ENCODE measurements at regions of chr4 and their contacts with region 1.

Region 1: GRCh38 chr4:152535903-152536544 is at the start of gene FBXW7:
- DNase-seq: peak; percentile 99 to 100 (median 100)
- H3K4me3 ChIP-seq: peak within 1 kb of the TSS; percentile 66 to 93
- H3K4me3 Mint-ChIP-seq: peak within 1 kb of the TSS; percentile 96 to 99 (median 98)
- H3K27ac ChIP-seq: peak within 1 kb of the TSS; percentile 87
- H3K27ac Mint-ChIP-seq: peak within 1 kb of the TSS; percentile 93 to 100 (median 99)
- H3K4me1 ChIP-seq: peaks cover 72% of the 10 kb centered on the region
- H3K4me1 Mint-ChIP-seq: peaks cover 43 to 77% (median 62%) of the 10 kb centered on the region in 4 donors
- H3K27me3 ChIP-seq: no peaks in the 10 kb centered on the region
- H3K27me3 Mint-ChIP-seq: no peaks in the 10 kb centered on the region
- total RNA-seq, gene FBXW7: 138 to 148 TPM

Region 2: DNA sequence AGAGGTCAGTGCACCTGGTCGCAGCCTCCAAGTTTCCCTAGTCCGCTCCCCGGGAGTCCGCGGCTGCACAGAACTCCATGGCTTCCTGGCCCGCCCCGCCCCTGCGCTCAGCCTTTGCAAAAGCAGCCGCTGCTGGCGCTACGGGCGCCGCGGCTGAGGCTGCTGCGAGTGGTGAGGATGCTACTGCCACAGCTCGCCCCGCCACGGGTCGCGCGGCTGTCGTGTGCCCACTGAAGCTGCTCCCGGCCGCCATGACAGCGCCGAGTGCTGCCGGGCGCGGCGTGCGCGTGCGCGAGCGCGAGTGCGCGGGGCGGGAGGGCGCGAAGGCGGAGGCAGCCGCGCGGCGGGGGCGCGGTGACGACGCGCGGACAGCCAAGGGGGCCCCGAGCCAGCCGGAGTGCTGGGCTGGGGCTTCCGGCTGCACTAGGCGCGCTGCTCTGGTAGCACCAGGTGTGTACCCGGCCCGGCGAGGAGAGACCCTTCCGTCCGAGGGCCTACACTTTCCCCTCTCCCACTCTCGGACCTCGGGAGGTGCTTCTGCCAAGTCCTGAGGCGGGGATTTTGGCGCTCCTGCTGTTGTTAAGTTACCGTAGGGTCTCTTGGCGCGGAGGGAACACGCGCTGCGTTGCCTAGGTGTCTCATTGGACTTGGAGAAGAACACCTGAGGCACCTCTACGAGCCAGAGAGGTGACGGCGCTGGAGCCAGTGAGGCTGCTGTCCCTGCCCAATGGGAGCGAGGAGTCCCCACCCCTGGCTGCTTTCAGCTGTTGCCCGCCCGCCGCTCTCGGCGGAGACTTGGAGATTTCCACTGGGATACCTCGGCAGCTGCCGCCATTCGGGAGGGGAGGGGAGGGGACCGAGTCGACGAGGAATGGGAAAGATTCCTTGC is 1520.3 kb before region 1 on chr4:
- CTCF ChIA-PET with region 1: no interaction called
- POLR2A ChIA-PET with region 1: no interaction called
- intact Hi-C with region 1: loop called (anchors 2 kb)
- DNase-seq: peak; percentile 81 to 90 (median 88)
- H3K4me3 ChIP-seq: peak overlapping the region; percentile 92 to 98
- H3K4me3 Mint-ChIP-seq: peak overlapping the region; percentile 100
- H3K27ac ChIP-seq: peak overlapping the region; percentile 88
- H3K27ac Mint-ChIP-seq: peak overlapping the region; percentile 93 to 99 (median 99)
- H3K4me1 ChIP-seq: peaks cover 40% of the 10 kb centered on the region
- H3K4me1 Mint-ChIP-seq: peaks cover 19 to 44% (median 26%) of the 10 kb centered on the region in 4 donors
- H3K27me3 ChIP-seq: no peaks in the 10 kb centered on the region
- H3K27me3 Mint-ChIP-seq: no peaks in the 10 kb centered on the region

Region 3: GRCh38 chr4:152106113-152106763 is 429.8 kb before region 1 on chr4:
- CTCF ChIA-PET with region 1: no interaction called
- POLR2A ChIA-PET with region 1: interaction called, 5 read pairs
- intact Hi-C with region 1: loop called (anchors 10 kb)
- DNase-seq: peak in 2 of 5 donors; percentile 20 to 29
- H3K4me3 ChIP-seq: no peak overlapping the region
- H3K4me3 Mint-ChIP-seq: peak overlapping the region in 6 of 8 donors; percentile 23 to 73 (median 52)
- H3K27ac ChIP-seq: no peak overlapping the region
- H3K27ac Mint-ChIP-seq: peak overlapping the region; percentile 8 to 83 (median 75)
- H3K4me1 ChIP-seq: peaks cover 93% of the 10 kb centered on the region
- H3K4me1 Mint-ChIP-seq: peaks cover 56 to 95% (median 80%) of the 10 kb centered on the region in 4 donors
- H3K27me3 ChIP-seq: no peaks in the 10 kb centered on the region
- H3K27me3 Mint-ChIP-seq: no peaks in the 10 kb centered on the region

Region 4: GRCh38 chr4:152525873-152526272 is 10.2 kb before region 1 on chr4:
- CTCF ChIA-PET with region 1: interaction called, 4 read pairs
- POLR2A ChIA-PET with region 1: interaction called, 41 read pairs
- intact Hi-C with region 1: no loop called
- DNase-seq: no peak
- H3K4me3 ChIP-seq: no peak overlapping the region
- H3K4me3 Mint-ChIP-seq: peak overlapping the region in 1 of 8 donors; percentile 7
- H3K27ac ChIP-seq: no peak overlapping the region
- H3K27ac Mint-ChIP-seq: no peak overlapping the region
- H3K4me1 ChIP-seq: peaks cover 74% of the 10 kb centered on the region
- H3K4me1 Mint-ChIP-seq: peaks cover 53 to 75% (median 64%) of the 10 kb centered on the region in 4 donors
- H3K27me3 ChIP-seq: no peaks in the 10 kb centered on the region
- H3K27me3 Mint-ChIP-seq: no peaks in the 10 kb centered on the region

Region 5: DNA sequence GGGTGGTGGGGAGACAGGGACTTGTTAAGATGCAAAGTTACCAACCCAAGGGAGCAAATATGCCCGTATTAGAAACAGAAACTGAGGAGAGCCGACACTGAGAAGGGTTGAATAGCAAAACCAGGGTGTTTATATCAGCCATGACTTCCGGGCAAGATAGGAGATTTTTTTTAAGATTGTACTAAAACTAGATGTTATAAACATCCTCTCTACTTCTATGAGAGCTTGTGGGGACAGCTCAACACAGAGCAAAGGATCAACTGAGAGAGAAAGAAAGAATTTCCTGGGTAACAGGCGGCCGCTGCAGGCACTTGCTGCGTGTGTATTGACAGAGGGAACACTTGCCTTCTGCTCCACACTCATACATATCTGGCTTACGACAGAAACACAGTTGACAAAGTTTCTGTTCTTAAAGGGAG is 49.0 kb after region 1 on chr4:
- CTCF ChIA-PET with region 1: interaction called, 12 read pairs
- POLR2A ChIA-PET with region 1: interaction called, 63 read pairs
- intact Hi-C with region 1: loop called (anchors 1 kb)
- DNase-seq: peak in 4 of 5 donors; percentile 29 to 44 (median 36)
- H3K4me3 ChIP-seq: no peak overlapping the region
- H3K4me3 Mint-ChIP-seq: peak overlapping the region; percentile 58 to 86 (median 77)
- H3K27ac ChIP-seq: peak overlapping the region; percentile 41
- H3K27ac Mint-ChIP-seq: peak overlapping the region; percentile 80 to 98 (median 92)
- H3K4me1 ChIP-seq: peaks cover 26% of the 10 kb centered on the region
- H3K4me1 Mint-ChIP-seq: peaks cover 16 to 31% (median 17%) of the 10 kb centered on the region in 4 donors
- H3K27me3 ChIP-seq: no peaks in the 10 kb centered on the region
- H3K27me3 Mint-ChIP-seq: peaks cover 0 to 1% of the 10 kb centered on the region in 2 donors

Region 6: GRCh38 chr4:152646221-152646620 is 110.2 kb after region 1 on chr4:
- CTCF ChIA-PET with region 1: interaction called, 27 read pairs
- POLR2A ChIA-PET with region 1: interaction called, 18 read pairs
- intact Hi-C with region 1: no loop called
- DNase-seq: no peak
- H3K4me3 ChIP-seq: no peak overlapping the region
- H3K4me3 Mint-ChIP-seq: peak overlapping the region in 1 of 8 donors; percentile 2
- H3K27ac ChIP-seq: no peak overlapping the region
- H3K27ac Mint-ChIP-seq: peak overlapping the region in 6 of 7 donors; percentile 7 to 89 (median 62)
- H3K4me1 ChIP-seq: peaks cover 23% of the 10 kb centered on the region
- H3K4me1 Mint-ChIP-seq: peaks cover 25 to 38% (median 31%) of the 10 kb centered on the region in 4 donors
- H3K27me3 ChIP-seq: no peaks in the 10 kb centered on the region
- H3K27me3 Mint-ChIP-seq: no peaks in the 10 kb centered on the region